ENCODE measurements at regions of chr4 and their contacts with region 1.

Region 1: GRCh38 chr4:140704392-140704960 is 51.7 kb downstream of the TBC1D9 start:
- DNase-seq: no peak
- H3K4me3 ChIP-seq: no peak overlapping the region
- H3K27ac ChIP-seq: no peak overlapping the region
- H3K4me1 ChIP-seq: no peaks in the 10 kb centered on the region
- H3K27me3 ChIP-seq: no peaks in the 10 kb centered on the region
- CTCF ChIP-seq: no peak

Region 2: GRCh38 chr4:139374251-139374650 is 1330.2 kb before region 1 on chr4:
- CTCF ChIA-PET with region 1: interaction called, 13 read pairs
- POLR2A ChIA-PET with region 1: no interaction called
- intact Hi-C with region 1: no loop called
- DNase-seq: no peak
- H3K4me3 ChIP-seq: no peak overlapping the region
- H3K27ac ChIP-seq: no peak overlapping the region
- H3K4me1 ChIP-seq: no peaks in the 10 kb centered on the region
- H3K27me3 ChIP-seq: no peaks in the 10 kb centered on the region
- CTCF ChIP-seq: no peak

Region 3: DNA sequence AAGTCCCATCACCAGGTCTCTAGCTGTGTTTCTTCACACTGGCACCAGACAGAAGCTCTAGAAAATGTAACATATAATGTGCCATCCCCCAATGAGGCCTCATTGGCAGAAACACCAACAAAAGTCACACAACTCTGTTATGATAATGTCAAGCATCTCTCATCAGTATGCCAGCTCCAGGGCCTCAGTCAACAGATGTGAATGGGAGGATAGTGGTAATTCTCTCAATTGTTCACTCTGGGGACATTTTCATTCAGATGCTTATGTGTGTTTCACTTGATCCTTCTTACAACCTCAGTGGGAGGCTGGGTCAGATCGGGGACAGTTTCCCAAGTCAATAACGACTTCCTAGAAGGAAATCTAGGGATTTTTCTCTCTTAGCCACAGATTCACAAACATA is 388.5 kb before region 1 on chr4:
- CTCF ChIA-PET with region 1: no interaction called
- POLR2A ChIA-PET with region 1: no interaction called
- intact Hi-C with region 1: no loop called
- DNase-seq: no peak
- H3K4me3 ChIP-seq: no peak overlapping the region
- H3K27ac ChIP-seq: no peak overlapping the region
- H3K4me1 ChIP-seq: no peaks in the 10 kb centered on the region
- H3K27me3 ChIP-seq: no peaks in the 10 kb centered on the region
- CTCF ChIP-seq: no peak

Region 4: GRCh38 chr4:140673729-140674128 is 30.7 kb before region 1 on chr4:
- CTCF ChIA-PET with region 1: no interaction called
- POLR2A ChIA-PET with region 1: no interaction called
- intact Hi-C with region 1: no loop called
- DNase-seq: no peak
- H3K4me3 ChIP-seq: no peak overlapping the region
- H3K27ac ChIP-seq: no peak overlapping the region
- H3K4me1 ChIP-seq: no peaks in the 10 kb centered on the region
- H3K27me3 ChIP-seq: no peaks in the 10 kb centered on the region
- CTCF ChIP-seq: no peak

Measured in PC-9 (cell line).